ENCODE measurements at regions of chr7 and their contacts with region 1.

Region 1: GRCh38 chr7:116984917-116985316 is 31.6 kb downstream of the ST7 start:
- DNase-seq: no peak
- H3K4me3 ChIP-seq: no peak overlapping the region
- H3K27ac ChIP-seq: no peak overlapping the region
- H3K4me1 ChIP-seq: no peaks in the 10 kb centered on the region
- H3K27me3 ChIP-seq: no peaks in the 10 kb centered on the region
- CTCF ChIP-seq: peak; percentile 20 to 67 (median 54)
- POLR2A ChIP-seq: no peak

Region 2: DNA sequence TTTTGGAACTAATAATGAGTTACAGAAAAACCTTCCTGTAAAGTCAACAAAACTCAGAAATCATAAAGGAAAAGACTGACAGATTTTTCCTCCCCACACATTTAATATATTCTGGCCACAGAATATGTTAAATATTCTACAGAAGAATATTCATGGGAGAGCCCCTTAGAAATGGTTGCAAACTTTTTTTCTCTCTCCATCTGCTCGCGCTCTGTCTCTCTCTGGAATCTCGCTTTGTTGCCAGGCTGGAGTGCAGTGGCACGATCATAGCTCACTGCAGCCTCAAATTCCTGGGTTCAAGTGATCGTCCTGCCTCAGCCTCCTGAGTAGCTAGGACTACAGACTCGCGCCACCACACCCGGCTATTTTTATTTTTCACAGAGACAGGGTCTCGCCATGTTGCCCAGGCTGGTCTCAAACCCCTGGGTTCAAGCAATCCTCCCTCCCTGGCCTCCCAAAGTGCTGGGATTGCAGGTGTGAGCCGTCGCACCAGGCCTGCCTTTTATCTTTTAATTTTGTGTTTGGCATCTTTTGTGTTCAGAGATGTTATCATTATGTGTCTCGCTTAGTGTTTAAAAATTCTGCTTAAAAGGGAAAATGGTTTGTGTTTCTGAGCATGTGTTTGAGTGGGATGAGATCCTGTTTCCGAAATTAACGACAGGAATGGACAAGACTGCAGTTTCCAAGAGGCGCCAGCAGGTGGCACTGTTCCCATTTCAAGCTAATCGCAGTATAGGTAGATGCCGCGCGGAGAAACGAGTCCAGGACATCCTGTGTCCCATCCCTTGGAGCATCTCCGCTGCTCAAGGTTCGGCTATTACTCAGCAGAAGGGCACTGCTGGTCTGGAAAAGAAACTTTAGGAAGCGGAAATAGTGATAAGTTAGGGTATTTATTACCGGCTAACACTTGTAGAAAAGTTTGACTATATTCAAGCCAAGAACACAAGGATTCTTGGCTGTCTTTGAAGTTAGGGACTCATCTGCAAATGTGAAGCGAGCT is 54.7 kb before region 1 on chr7:
- intact Hi-C with region 1: loop called (anchors 10 kb)
- DNase-seq: peak; percentile 79
- H3K4me3 ChIP-seq: no peak overlapping the region
- H3K27ac ChIP-seq: no peak overlapping the region
- H3K4me1 ChIP-seq: no peaks in the 10 kb centered on the region
- H3K27me3 ChIP-seq: no peaks in the 10 kb centered on the region
- CTCF ChIP-seq: peak; percentile 82 to 93 (median 86)
- POLR2A ChIP-seq: no peak

Region 3: DNA sequence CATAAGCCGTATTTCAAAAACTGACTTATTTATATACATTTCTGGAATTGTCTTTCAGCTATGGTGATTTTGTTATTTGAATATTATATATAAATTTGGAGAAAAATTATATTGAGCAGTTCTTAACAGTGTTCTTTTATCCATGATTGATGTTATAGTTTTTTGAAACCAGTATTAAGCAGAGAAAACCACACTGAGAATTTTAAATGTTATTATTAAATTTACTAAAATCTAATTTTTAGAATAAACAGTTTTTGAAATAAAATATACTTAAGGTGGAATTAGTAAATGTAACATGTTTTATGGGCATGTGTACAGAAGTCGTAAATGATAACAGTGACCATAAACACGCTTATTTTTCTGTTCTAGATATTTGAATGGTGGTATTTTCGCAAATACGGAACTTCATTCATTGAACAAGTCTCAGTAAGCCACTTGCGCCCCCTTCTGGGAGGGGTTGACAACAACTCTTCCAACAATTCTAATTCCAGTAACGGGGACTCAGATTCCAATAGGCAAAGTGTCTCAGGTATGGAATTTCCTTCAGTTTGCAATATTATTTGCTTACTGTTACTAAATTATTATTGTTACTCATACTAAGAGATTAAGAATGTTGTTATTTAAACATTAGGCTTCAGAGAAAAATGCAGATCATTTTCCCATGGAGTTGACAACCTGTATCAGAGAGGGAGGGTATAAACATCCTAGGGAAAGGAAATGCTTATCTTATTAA is 134.4 kb after region 1 on chr7:
- intact Hi-C with region 1: loop called (anchors 2 kb)
- DNase-seq: peak; percentile 67
- H3K4me3 ChIP-seq: no peak overlapping the region
- H3K27ac ChIP-seq: no peak overlapping the region
- H3K4me1 ChIP-seq: no peaks in the 10 kb centered on the region
- H3K27me3 ChIP-seq: no peaks in the 10 kb centered on the region
- CTCF ChIP-seq: peak; percentile 55 to 82 (median 78)
- POLR2A ChIP-seq: no peak

Region 4: GRCh38 chr7:117143580-117143979 is 158.7 kb after region 1 on chr7:
- intact Hi-C with region 1: no loop called
- DNase-seq: no peak
- H3K4me3 ChIP-seq: no peak overlapping the region
- H3K27ac ChIP-seq: no peak overlapping the region
- H3K4me1 ChIP-seq: no peaks in the 10 kb centered on the region
- H3K27me3 ChIP-seq: no peaks in the 10 kb centered on the region
- CTCF ChIP-seq: no peak
- POLR2A ChIP-seq: no peak

Region 5: GRCh38 chr7:117308891-117309290 is 324.0 kb after region 1 on chr7:
- intact Hi-C with region 1: no loop called
- DNase-seq: no peak
- H3K4me3 ChIP-seq: no peak overlapping the region
- H3K27ac ChIP-seq: no peak overlapping the region
- H3K4me1 ChIP-seq: no peaks in the 10 kb centered on the region
- H3K27me3 ChIP-seq: no peaks in the 10 kb centered on the region
- CTCF ChIP-seq: no peak
- POLR2A ChIP-seq: no peak